WTC11 (cell line): ENCODE measurements at regions of chr1 and their contacts with region 1.

Region 1: DNA sequence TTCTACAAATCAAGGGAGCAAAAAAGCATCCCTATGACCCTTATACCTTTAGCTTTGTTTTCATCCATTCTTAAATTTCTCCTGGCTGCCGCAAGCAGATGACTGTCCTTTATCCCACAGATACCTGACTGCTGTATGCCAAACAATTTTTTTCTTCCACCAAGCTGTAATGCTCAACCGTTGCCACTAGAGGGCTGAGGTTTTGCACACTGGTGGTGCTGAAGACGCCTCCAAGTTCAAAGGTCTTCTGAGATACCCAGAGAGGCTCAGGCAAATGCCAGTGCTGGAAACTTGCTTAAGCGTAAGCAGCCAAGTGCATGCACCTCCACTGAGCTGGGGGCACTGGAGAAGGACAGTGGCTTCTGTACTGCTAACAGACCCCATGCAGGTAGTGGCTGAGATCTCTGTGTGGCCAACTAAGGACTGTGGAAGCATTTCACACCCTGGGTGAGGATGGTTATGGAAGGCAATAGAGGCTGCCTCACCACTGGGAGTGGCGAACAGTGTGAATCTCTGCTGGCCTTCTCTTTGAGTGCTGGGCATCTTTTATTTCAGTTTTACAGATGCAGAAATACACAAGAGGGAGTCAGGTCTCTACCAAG is 28.5 kb downstream of the CNIH3 start:
- DNase-seq: peak; percentile 73
- ATAC-seq: peak; percentile 72
- H3K4me3 Mint-ChIP-seq: no peak overlapping the region
- H3K27ac Mint-ChIP-seq: no peak overlapping the region
- H3K4me1 Mint-ChIP-seq: peaks cover 24% of the 10 kb centered on the region
- H3K27me3 Mint-ChIP-seq: no peaks in the 10 kb centered on the region
- CTCF ChIP-seq: peak; percentile 93

Region 2: DNA sequence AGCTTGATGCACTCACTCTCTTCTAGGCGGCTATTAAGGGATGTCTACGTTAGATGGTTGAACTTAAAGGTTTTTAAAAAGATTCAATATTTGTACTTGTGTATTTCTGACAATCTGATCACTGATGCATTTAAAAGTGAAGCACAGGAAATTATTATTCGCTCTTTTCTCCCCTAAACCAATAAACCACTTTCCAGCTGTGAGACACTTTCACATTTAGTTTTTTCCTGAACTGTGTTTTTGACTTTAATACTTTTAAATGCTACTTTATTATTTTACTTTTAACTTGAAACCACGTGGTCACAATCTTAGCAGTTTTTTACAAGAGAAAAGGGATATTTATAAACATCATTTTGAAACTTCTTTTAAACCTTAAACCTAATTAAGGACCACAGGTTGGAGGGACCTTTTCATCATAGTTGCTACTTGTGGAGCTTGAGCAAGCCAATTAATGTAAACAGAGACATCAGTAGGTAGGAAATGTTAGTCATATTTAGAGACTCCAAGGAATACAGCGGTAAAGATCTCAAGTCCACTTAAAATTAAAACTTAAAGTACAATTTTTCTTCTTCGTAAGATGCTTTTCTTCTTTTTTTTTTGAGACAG is 219.3 kb before region 1 on chr1:
- CTCF ChIA-PET with region 1: no interaction called
- POLR2A ChIA-PET with region 1: no interaction called
- DNase-seq: no peak
- ATAC-seq: no peak
- H3K4me3 Mint-ChIP-seq: no peak overlapping the region
- H3K27ac Mint-ChIP-seq: no peak overlapping the region
- H3K4me1 Mint-ChIP-seq: peaks cover under 1% of the 10 kb centered on the region; the same call in 1 of the 2 replicates
- H3K27me3 Mint-ChIP-seq: no peaks in the 10 kb centered on the region
- CTCF ChIP-seq: no peak

Region 3: DNA sequence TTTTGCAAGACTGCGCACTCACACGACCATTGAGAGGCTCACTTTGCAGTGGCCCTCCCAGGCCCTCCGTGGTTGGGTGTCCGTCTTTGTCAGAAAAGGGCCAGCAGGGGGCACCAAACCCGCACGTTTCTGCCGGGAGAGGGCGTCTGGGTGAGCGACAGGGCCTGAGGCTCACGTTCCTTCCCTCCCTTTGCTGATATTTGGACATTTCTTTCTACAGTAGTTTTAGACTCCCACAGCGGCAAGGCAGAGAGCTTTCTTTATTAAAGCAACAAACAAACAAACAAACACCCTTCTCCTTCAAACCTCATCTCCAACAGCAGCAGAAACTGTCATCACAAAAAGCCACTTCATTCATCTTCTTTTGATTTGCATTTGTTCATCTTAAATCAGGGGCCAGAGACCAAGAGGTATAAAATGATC is 130.9 kb before region 1 on chr1:
- CTCF ChIA-PET with region 1: interaction called, 27 read pairs
- POLR2A ChIA-PET with region 1: no interaction called
- DNase-seq: peak; percentile 95
- ATAC-seq: peak; percentile 93
- H3K4me3 Mint-ChIP-seq: no peak overlapping the region
- H3K27ac Mint-ChIP-seq: peak overlapping the region; percentile 26; the same call in 1 of the 2 replicates
- H3K4me1 Mint-ChIP-seq: peaks cover 15% of the 10 kb centered on the region
- H3K27me3 Mint-ChIP-seq: no peaks in the 10 kb centered on the region; the same call in 1 of the 2 replicates
- CTCF ChIP-seq: peak; percentile 86

Region 4: GRCh38 chr1:224565186-224565585 is 79.5 kb before region 1 on chr1:
- CTCF ChIA-PET with region 1: no interaction called
- POLR2A ChIA-PET with region 1: no interaction called
- DNase-seq: no peak
- ATAC-seq: no peak
- H3K4me3 Mint-ChIP-seq: no peak overlapping the region
- H3K27ac Mint-ChIP-seq: no peak overlapping the region
- H3K4me1 Mint-ChIP-seq: no peaks in the 10 kb centered on the region
- H3K27me3 Mint-ChIP-seq: peaks cover 3% of the 10 kb centered on the region; the same call in 1 of the 2 replicates
- CTCF ChIP-seq: no peak

Region 5: DNA sequence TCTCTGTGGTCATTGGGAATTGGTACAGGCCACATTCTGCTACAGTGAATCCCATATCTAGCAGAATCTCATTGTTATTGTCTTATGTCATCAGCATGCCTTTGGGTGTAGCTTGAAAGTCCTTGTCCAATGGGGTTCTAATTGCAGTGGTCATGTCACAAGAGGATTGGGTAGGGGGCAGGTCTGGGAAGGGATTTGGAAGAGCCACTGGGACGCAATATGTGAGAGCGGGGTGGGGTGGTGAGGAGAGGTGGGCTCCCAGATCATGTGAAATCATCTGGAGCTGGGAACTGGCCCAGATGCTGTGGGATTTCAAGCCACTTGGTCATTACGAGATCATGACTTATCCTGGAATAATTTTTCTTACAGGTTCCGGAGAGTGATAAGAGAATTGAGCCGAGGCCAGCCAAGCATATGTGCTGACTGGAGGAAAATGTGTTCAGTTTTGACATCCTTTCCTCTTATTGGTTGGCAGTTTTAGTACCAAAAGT is 12.2 kb before region 1 on chr1:
- CTCF ChIA-PET with region 1: interaction called, 19 read pairs
- POLR2A ChIA-PET with region 1: no interaction called
- DNase-seq: no peak
- ATAC-seq: no peak
- H3K4me3 Mint-ChIP-seq: no peak overlapping the region
- H3K27ac Mint-ChIP-seq: no peak overlapping the region
- H3K4me1 Mint-ChIP-seq: peaks cover 41% of the 10 kb centered on the region
- H3K27me3 Mint-ChIP-seq: no peaks in the 10 kb centered on the region
- CTCF ChIP-seq: no peak

Region 6: GRCh38 chr1:224770336-224770693 is 125.7 kb after region 1 on chr1:
- CTCF ChIA-PET with region 1: no interaction called
- POLR2A ChIA-PET with region 1: no interaction called
- DNase-seq: no peak
- ATAC-seq: no peak
- H3K4me3 Mint-ChIP-seq: no peak overlapping the region
- H3K27ac Mint-ChIP-seq: no peak overlapping the region
- H3K4me1 Mint-ChIP-seq: peaks cover 19% of the 10 kb centered on the region
- H3K27me3 Mint-ChIP-seq: peaks cover 3% of the 10 kb centered on the region; the same call in 1 of the 2 replicates
- CTCF ChIP-seq: no peak